ENCODE measurements at regions of chr1 and their contacts with region 1.

Region 1: GRCh38 chr1:204494281-204495077 is at the start of gene PIK3C2B:
- DNase-seq: peak; percentile 93
- ATAC-seq: peak; percentile 95
- H3K4me3 ChIP-seq: peak within 1 kb of the TSS; percentile 62
- H3K27ac ChIP-seq: peak within 1 kb of the TSS; percentile 87
- H3K4me1 ChIP-seq: peaks cover 31% of the 10 kb centered on the region
- H3K27me3 ChIP-seq: no peaks in the 10 kb centered on the region
- CTCF ChIP-seq: peak; percentile 60
- total RNA-seq, gene PIK3C2B: 47.3 TPM

Region 2: DNA sequence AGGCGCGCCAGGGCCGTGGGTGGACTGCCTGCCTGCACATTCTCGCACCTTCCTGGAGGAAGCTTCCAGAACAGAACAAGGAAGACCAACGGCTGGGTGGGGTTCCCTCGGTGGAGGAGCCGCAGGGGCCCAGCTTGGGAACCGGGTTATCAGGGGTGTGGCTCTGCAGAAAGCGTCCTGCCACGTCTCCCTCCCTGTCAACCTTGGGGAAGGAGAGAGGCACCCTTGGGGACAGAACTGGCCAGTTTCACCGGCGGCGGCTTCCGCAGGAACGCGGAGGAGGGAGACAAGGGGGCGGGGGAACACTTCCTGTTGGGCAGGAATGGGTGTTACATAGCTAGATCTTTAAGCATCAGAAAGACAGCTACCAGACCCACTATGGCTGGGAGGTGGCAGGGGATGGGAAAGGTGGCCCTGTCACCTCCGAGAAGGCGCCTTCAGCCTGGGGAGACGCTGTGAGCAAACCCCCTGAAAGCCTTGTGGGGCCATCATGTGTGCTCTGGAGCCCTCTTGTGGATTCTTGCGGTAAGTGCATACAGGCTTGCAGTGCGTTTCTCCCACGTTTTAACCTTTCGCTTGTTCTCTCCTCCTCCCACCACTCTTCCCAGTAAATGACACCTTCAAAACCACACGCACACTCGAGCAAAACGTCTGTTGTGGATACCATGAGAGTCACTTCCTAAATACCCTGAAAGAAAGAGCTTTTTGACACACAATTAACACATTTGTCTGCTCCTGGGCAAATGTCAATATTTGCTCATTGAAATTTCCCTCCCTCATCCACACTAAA is 130.9 kb before region 1 on chr1:
- intact Hi-C with region 1: no loop called
- DNase-seq: peak; percentile 88
- ATAC-seq: peak; percentile 92
- H3K4me3 ChIP-seq: peak overlapping the region; percentile 53
- H3K27ac ChIP-seq: peak overlapping the region; percentile 12
- H3K4me1 ChIP-seq: peaks cover 19% of the 10 kb centered on the region
- H3K27me3 ChIP-seq: no peaks in the 10 kb centered on the region
- CTCF ChIP-seq: peak; percentile 97

Region 3: DNA sequence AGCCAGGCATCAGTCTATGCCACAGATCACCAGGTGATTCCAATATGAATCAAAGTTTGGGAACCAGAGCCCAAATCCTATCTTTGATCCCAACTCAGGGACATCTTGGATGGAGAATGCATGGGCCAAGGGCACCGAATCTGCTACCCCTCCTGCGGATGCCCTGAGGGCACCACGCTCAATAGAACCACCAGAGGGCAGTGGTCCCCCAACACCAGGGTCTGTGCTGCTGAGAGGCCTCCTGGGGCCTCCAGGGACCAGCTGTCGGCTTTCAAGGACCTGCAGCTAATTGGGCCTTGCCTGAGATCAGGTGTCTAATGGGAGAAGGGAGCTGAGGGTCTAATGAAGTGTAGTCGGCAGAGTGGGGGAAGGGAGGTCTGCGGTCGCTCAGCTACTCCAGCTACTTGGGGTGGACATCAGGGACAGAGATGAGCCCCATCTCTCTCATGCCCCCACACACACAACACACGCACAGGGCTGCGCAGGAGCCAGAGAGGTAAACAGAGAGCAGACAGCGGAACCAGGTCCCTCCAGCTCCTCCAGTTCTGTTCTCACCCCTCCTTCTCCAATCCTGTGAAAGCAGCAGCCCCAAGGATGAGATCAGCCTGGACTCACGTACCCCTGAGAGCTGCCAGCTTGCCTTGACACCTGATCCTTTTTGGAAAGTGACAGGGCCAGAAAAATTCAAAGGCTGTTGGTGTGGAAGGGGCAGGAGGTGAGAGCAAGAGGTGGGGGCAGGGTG is 47.9 kb before region 1 on chr1:
- intact Hi-C with region 1: loop called (anchors 5 kb)
- DNase-seq: peak; percentile 79
- ATAC-seq: peak; percentile 84
- H3K4me3 ChIP-seq: no peak overlapping the region
- H3K27ac ChIP-seq: peak overlapping the region; percentile 36
- H3K4me1 ChIP-seq: peaks cover 24% of the 10 kb centered on the region
- H3K27me3 ChIP-seq: no peaks in the 10 kb centered on the region
- CTCF ChIP-seq: peak; percentile 81

Region 4: GRCh38 chr1:204572931-204573891 is 78.7 kb after region 1 on chr1:
- intact Hi-C with region 1: no loop called
- DNase-seq: no peak
- ATAC-seq: no peak
- H3K4me3 ChIP-seq: no peak overlapping the region
- H3K27ac ChIP-seq: no peak overlapping the region
- H3K4me1 ChIP-seq: peaks cover 5% of the 10 kb centered on the region
- H3K27me3 ChIP-seq: no peaks in the 10 kb centered on the region
- CTCF ChIP-seq: no peak

Region 5: DNA sequence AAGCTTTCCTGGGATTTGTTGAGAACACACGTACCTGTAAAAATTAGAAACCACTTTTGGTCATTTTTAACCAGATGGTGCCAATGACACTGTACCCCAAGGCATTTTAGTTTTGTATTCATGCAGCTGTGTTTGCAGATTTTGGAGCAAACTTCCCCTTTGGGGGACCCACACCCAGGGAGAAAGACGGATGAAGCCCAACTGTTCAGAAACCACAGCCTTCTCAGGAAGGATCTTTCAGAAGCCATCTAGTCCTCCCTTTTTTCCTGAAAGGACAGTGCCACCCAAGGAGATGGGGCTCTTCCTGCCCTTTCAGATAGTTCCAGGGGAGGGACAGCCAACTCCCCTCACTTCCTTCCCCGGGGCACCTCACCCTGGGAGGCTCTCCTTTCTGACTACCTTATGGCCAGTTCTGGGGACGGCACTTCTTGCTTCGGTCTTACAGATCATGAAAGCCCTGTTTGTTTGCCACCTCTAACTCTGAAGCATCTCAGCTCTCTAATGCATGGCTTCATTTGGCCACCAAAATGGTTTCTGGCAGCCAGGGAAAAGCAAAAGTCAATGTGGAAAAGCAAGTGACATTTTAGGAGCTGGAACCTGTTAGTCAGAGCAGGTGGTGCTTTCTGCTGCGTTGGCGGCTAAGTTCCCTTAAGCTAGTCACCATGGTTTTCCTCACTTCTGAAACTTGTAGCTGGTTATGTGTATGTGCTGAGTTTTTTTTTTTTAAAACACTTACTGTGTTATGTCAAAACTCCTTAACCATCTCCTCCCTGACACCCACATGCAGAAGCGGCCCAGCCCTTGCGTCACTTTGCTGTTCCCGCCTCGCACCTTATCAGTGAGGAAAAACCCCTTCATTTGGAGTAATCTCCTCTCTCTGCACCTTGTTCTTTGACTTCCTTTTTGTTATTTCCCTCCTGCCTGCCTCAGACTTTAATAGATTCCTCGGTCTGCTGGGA is 743.3 kb after region 1 on chr1:
- intact Hi-C with region 1: no loop called
- DNase-seq: peak; percentile 37
- ATAC-seq: no peak
- H3K4me3 ChIP-seq: no peak overlapping the region
- H3K27ac ChIP-seq: peak overlapping the region; percentile 24
- H3K4me1 ChIP-seq: peaks cover 29% of the 10 kb centered on the region
- H3K27me3 ChIP-seq: no peaks in the 10 kb centered on the region
- CTCF ChIP-seq: no peak